ENCODE measurements at regions of chr2 and their contacts with region 1.

Region 1: DNA sequence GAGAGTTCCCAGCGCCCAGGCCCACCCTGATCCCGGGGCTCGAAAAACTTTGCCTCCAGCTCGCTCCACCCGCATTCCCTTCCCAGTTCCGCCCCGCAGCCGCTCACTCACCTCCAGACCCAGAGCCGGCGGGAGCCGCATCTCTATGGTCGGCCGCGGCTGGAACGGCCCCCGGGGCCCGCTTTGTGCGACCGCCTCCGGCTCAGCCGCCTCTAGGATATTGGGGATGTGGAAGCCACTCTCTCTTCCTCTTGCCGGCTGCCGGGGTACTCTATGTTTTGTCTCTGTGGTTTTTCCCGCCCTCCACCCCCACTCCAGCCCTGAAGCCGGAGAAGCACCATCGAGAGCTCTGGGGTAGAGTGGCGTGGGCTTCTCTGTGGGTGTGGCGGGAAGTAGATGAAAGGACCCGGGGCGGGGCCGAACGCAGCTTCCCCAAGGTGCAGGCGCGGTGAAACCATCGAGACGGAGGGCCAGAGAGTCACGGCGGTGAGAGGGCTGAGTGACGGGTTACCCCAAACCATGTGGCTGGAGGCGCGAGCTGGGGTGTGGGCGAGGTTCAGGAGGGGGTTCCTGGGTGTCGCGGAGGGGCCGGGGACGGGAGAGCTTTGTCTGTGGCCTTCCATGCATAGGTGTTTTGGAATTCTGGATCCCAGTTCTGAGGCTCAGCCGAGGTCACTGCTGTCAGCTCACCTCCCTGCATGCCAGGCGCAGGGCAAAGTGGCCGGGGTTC is at the starts of genes BCS1L and ZNF142:
- DNase-seq: peak; percentile 92
- H3K4me3 Mint-ChIP-seq: peak within 1 kb of the TSS; percentile 99
- H3K27ac Mint-ChIP-seq: peak within 1 kb of the TSS; percentile 97
- H3K4me1 Mint-ChIP-seq: peaks cover 29% of the 10 kb centered on the region
- H3K27me3 Mint-ChIP-seq: no peaks in the 10 kb centered on the region
- total RNA-seq, gene BCS1L: 85.1 and 85.3 TPM in 2 replicates
- total RNA-seq, gene ZNF142: 61.8 and 64.4 TPM in 2 replicates

Region 2: DNA sequence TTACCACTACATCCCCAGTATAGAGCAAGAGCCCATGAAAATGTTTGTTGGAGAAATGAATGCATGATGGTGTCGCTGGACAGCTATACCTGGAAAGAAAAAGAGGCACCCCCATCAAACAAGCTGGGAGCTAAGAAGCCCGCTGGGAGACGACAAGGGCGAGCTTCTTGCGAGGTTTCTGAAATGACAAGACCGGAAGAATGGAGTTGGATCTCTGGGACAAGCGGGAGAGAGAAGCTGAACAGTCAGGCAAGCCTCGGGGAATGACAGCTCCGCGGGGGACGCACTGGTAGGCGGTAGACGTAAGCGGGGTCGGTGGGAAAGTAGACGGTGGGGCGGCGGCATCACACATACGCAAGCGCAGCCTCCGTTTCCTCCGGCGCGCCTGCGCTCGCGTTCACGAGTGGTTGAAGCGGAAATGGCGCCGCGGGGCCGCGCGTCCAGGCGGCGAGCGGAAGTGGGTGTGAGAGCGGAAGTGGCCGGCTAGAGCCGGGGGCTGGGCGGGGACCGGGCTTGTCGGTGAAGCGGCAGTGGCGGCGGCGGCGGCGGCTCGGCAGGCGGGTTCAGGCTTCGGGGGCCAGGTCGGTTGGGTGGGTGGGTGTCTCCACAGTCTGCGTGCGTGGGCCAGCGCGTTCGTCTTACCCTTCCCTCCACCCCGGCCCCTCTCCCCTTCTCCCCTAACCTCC is 442.6 kb before region 1 on chr2 and contains the start of gene ARPC2:
- intact Hi-C with region 1: loop called (anchors 5 kb)
- DNase-seq: peak; percentile 96
- H3K4me3 Mint-ChIP-seq: peak within 1 kb of the TSS; percentile 91
- H3K27ac Mint-ChIP-seq: peak within 1 kb of the TSS; percentile 95
- H3K4me1 Mint-ChIP-seq: peaks cover 36% of the 10 kb centered on the region
- H3K27me3 Mint-ChIP-seq: no peaks in the 10 kb centered on the region
- total RNA-seq, gene ARPC2: 507 and 509 TPM in 2 replicates

Region 3: GRCh38 chr2:218286570-218287459 is 372.6 kb before region 1 on chr2:
- intact Hi-C with region 1: loop called (anchors 1 kb)
- DNase-seq: peak; percentile 82
- H3K4me3 Mint-ChIP-seq: peak overlapping the region; percentile 94
- H3K27ac Mint-ChIP-seq: peak overlapping the region; percentile 99
- H3K4me1 Mint-ChIP-seq: peaks cover 72% of the 10 kb centered on the region
- H3K27me3 Mint-ChIP-seq: no peaks in the 10 kb centered on the region

Region 4: DNA sequence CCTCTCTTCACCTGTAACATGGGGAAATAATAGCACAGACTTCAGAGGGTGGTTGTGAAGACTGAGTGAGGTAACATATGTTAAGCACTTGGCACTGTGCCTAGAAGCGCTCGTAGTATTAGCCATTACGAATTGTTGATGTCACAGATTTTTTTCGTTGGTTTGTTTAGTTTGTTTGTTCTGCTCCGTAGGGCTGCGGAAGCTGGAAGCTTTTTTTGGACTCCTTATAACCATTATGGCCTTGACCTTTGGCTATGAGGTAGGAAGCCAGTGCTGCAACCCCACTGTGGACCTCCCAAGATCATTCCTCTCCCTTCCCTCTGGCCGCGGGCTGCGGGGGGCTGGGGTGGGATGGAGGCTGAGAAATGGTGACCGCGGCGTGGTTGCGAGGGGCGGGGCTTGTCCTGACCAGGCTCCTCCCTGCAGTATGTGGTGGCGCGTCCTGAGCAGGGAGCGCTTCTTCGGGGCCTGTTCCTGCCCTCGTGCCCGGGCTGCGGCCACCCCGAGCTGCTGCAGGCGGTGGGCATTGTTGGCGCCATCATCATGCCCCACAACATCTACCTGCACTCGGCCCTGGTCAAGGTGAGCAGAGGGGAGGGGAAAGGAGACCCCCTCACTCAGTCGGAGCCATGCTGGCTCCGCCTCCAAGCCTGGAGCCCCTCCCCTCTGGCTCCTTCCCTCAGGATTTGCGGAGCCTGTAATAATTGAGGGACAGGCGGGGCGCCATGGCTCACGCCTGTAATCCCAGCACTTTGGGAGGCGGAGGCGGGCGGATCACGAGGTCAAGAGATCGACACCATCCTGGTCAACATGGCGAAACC is 271.8 kb before region 1 on chr2:
- intact Hi-C with region 1: no loop called
- DNase-seq: no peak
- H3K4me3 Mint-ChIP-seq: no peak overlapping the region
- H3K27ac Mint-ChIP-seq: no peak overlapping the region
- H3K4me1 Mint-ChIP-seq: peaks cover 6% of the 10 kb centered on the region
- H3K27me3 Mint-ChIP-seq: peaks cover 19% of the 10 kb centered on the region

Region 5: DNA sequence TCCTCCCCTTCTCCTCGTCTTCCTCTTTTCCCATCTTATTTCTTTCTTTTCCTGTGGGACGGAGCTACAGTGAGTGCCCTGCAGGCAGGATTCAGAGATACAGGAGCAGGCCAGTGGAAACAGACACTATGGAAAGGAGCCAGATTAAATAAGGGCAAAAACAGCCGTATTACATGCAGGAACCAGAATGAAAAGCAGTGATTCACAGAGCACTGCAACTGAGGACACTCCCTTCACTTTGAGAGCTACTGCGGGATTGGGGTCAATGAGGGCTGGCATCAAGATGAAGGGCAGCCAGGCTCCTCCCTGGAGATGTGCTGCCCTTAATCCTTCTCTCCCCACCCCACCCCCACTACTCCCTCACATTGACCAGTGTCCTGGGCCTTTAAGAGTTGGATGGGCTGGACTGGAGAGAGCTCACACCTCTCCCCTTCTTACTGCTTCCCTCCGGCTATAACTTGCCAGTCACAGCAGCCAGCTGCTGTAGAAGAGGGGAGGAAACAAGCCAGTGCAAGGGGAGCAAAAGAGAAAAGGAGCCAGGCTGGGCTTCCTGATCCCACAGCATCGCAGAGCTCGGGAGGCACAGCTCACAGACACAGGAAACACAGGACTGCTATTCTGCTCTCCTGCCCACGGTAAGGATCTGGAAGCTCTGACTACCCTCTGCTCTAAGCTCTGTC is 51.8 kb before region 1 on chr2 and contains the start of gene PLCD4:
- intact Hi-C with region 1: no loop called
- DNase-seq: no peak
- H3K4me3 Mint-ChIP-seq: no peak within 1 kb of the TSS
- H3K27ac Mint-ChIP-seq: no peak within 1 kb of the TSS
- H3K4me1 Mint-ChIP-seq: no peaks in the 10 kb centered on the region
- H3K27me3 Mint-ChIP-seq: peaks cover 10% of the 10 kb centered on the region
- total RNA-seq, gene PLCD4: 0.54 and 0.62 TPM in 2 replicates

Region 6: GRCh38 chr2:218671654-218672566 is 12.5 kb after region 1 on chr2 and contains the starts of genes RNF25 and STK36:
- intact Hi-C with region 1: loop called (anchors 1 kb)
- DNase-seq: peak; percentile 77
- H3K4me3 Mint-ChIP-seq: peak within 1 kb of the TSS; percentile 100
- H3K27ac Mint-ChIP-seq: peak within 1 kb of the TSS; percentile 93
- H3K4me1 Mint-ChIP-seq: peaks cover 22% of the 10 kb centered on the region
- H3K27me3 Mint-ChIP-seq: no peaks in the 10 kb centered on the region
- total RNA-seq, gene RNF25: 29.1 and 31.6 TPM in 2 replicates
- total RNA-seq, gene STK36: 15.9 TPM in 2 replicates

Region 7: DNA sequence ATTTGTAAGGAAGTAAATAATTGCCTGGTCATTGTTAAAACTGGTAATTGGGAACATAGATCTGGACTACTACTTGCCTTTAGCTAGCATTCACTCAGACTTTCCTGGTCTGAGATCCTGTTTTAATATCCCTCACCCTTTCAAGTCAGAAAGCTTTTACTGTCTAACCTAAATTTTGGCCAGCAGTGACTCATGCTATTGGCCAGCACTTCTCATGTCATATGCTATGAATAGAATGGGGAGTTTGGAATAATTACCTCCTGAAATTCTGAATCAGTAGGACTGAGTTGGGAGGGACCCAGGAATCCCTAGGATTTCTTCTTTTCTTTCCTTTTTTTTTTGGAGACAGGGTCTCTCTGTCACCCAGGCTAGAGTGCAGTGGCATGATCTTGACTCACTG is 31.8 kb after region 1 on chr2:
- intact Hi-C with region 1: loop called (anchors 1 kb)
- DNase-seq: no peak
- H3K4me3 Mint-ChIP-seq: no peak overlapping the region
- H3K27ac Mint-ChIP-seq: no peak overlapping the region
- H3K4me1 Mint-ChIP-seq: no peaks in the 10 kb centered on the region
- H3K27me3 Mint-ChIP-seq: no peaks in the 10 kb centered on the region

Region 8: DNA sequence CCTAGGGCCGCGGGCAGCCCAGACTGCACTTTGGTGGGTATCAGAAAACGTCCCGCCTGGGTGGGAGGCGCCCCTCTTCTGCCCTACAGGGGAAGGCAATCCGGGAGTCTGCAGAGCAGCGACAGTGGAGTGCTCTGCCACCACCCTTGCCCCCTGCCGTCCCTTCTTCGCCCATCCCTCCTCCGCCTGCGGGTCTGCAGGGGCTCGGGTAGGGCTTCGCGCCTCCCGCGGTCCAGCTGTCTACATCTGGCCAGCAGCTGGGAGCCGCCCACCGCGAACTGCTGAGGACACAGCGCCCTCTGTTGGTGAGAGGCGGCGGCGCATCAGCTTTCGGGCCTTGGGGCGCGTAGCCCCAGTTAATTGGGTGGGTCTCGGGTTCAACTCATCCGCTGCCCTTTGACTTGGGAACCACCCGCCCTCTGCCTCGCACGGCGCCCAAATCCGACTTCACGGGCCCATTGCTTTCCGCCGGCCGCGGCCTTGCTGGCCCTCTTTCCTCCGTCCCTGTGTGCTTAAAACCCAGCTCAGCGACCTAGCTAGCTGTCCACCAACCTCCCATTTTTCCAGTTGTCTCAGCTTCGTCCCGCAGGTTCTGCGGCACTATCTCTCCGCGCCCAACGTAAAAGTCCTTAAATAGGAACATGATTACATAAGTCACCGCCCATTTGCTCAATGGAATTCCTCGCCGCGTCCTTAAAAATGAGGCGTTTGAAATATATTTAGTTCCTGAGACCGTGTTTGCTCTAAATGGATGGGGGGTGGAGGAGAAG is 238.9 kb after region 1 on chr2:
- intact Hi-C with region 1: loop called (anchors 1 kb)
- DNase-seq: peak; percentile 71
- H3K4me3 Mint-ChIP-seq: peak overlapping the region; percentile 73
- H3K27ac Mint-ChIP-seq: peak overlapping the region; percentile 86
- H3K4me1 Mint-ChIP-seq: peaks cover 42% of the 10 kb centered on the region
- H3K27me3 Mint-ChIP-seq: peaks cover 56% of the 10 kb centered on the region

Region 9: DNA sequence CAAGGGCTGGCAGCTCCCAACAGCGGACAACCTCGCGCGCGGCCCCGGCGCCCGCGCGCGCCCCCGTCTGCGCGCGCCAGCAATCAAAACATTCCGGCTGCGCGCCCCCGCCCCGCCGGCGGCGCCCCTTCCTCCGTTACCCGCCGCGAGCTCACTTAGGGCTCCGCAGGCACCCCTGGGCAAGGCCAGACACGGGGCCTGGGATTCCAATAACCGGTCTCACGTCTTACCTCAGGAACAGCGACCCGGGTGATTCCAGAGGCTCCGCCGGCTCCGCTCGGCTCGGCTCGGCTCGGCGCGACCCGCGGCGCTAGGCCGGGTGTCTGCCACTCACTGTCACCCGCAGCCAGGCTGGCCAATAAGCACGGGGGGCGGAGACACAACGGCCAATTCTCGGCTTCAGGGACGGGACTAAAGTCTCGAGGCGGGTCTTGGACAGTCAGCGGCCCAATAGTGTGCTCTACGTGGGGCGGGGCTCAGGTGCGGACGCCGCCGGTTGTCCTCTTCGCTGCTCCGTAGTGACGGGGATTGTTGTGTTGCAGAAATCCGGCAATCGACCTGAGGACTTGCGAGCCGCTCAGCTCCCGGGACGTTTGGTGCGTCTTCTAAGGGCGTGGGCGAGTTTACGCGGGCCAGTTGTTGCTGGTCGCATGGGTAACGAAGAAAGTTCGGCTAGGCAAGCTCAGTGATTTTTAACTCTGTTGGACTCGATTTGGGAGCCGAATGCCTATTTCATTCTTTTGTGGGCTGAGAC is 570.1 kb after region 1 on chr2 and contains the starts of genes ANKZF1 and ATG9A:
- intact Hi-C with region 1: loop called (anchors 2 kb)
- DNase-seq: peak; percentile 98
- H3K4me3 Mint-ChIP-seq: peak within 1 kb of the TSS; percentile 97
- H3K27ac Mint-ChIP-seq: peak within 1 kb of the TSS; percentile 99
- H3K4me1 Mint-ChIP-seq: peaks cover 47% of the 10 kb centered on the region
- H3K27me3 Mint-ChIP-seq: no peaks in the 10 kb centered on the region
- total RNA-seq, gene ANKZF1: 112 and 117 TPM in 2 replicates
- total RNA-seq, gene ATG9A: 55.3 and 57.0 TPM in 2 replicates